HCT116 (cell line): ENCODE measurements at regions of chr6 and their contacts with region 1.

Region 1: DNA sequence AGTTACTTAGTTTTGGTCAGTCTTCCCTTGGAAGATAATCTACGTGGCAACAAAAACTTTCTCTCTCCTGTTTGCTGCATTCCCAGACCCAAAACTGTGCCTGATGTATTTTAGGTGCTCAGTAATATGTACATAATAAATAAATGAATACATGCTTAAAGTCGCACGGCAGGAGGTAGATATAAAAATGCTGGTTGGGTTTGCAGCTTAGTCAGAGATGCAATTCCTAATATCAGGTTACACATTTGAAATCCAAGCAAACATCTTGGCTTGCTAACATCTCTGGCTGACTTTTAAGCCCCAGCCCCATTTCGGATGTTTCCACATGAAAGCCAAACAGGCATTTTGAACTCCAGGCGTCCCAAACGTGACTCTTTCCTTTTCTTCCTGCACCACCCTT is 91.0 kb downstream of the KCNQ5 start:
- DNase-seq: no peak
- ATAC-seq: no peak
- H3K4me3 ChIP-seq: no peak overlapping the region
- H3K27ac ChIP-seq: no peak overlapping the region
- H3K4me1 ChIP-seq: no peaks in the 10 kb centered on the region
- H3K27me3 ChIP-seq: peaks cover 32% of the 10 kb centered on the region
- CTCF ChIP-seq: no peak
- POLR2A ChIP-seq: no peak
- RAD21 ChIP-seq: no peak

Region 2: GRCh38 chr6:72386324-72386723 is 326.6 kb before region 1 on chr6:
- CTCF ChIA-PET with region 1: no interaction called
- POLR2A ChIA-PET with region 1: no interaction called
- RAD21 ChIA-PET with region 1: no interaction called
- intact Hi-C with region 1: no loop called
- DNase-seq: no peak
- ATAC-seq: no peak
- H3K4me3 ChIP-seq: no peak overlapping the region
- H3K27ac ChIP-seq: no peak overlapping the region
- H3K4me1 ChIP-seq: no peaks in the 10 kb centered on the region
- H3K27me3 ChIP-seq: peaks cover 10% of the 10 kb centered on the region
- CTCF ChIP-seq: no peak
- POLR2A ChIP-seq: no peak
- RAD21 ChIP-seq: no peak

Region 3: DNA sequence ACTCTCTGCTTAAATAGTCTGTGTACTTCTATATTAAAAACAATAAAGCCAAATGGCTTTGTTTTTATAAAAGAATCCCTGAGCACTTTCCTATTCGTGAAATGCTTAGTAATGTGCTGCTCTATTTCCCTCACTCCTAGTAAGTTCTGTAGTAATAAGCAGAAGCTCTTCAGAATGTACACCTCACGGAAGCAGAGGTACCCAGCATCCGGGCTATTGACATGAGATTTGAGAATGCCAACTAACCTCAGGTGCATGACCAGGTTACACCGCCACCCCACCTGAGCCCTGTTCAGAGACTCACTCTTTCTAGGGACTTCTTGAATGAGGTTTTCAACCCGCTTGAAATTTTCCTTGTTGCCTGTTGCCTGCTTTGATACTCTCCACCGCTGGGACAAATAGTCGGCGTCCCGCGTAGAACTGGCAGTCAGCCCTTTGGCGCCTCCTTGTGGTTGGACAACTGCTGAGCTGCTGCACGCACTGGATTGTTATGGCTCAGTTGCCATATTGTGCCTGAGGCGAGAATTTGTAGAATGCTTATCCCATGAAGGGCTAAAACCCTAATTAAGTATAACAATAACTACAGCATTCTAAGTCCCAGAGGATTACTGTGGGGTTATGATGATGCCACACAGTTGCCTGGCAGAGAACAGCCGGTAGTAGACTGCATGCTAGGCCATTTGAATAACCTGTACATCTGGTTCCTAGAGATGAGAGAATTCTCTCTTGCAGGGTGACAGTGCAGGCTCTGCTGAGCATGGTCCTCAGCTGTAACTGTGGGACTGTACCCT is 416.9 kb after region 1 on chr6:
- CTCF ChIA-PET with region 1: no interaction called
- POLR2A ChIA-PET with region 1: no interaction called
- RAD21 ChIA-PET with region 1: no interaction called
- intact Hi-C with region 1: loop called (anchors 5 kb)
- DNase-seq: peak; percentile 66
- ATAC-seq: peak; percentile 91
- H3K4me3 ChIP-seq: no peak overlapping the region
- H3K27ac ChIP-seq: no peak overlapping the region
- H3K4me1 ChIP-seq: peaks cover 0 to 11% of the 10 kb centered on the region in 2 experiments; a peak in 1 of 4 replicates
- H3K27me3 ChIP-seq: peaks cover 25% of the 10 kb centered on the region
- CTCF ChIP-seq: peak; percentile 88 to 99 (median 99)
- POLR2A ChIP-seq: no peak
- RAD21 ChIP-seq: peak; percentile 93